ENCODE measurements at regions of chr1 and their contacts with region 1.

Region 1: GRCh38 chr1:202056644-202057461 is 46.5 kb downstream of the ELF3 start:
- DNase-seq: peak; percentile 100
- H3K4me3 Mint-ChIP-seq: peak overlapping the region; percentile 28
- H3K27ac Mint-ChIP-seq: peak overlapping the region; percentile 97
- H3K4me1 Mint-ChIP-seq: peaks cover 33% of the 10 kb centered on the region
- H3K27me3 Mint-ChIP-seq: no peaks in the 10 kb centered on the region
- CTCF ChIP-seq: no peak

Region 2: GRCh38 chr1:201713085-201713810 is 343.6 kb before region 1 on chr1:
- CTCF ChIA-PET with region 1: no interaction called
- POLR2A ChIA-PET with region 1: no interaction called
- intact Hi-C with region 1: no loop called
- DNase-seq: peak; percentile 100
- H3K4me3 Mint-ChIP-seq: peak overlapping the region; percentile 59
- H3K27ac Mint-ChIP-seq: peak overlapping the region; percentile 98
- H3K4me1 Mint-ChIP-seq: peaks cover 54% of the 10 kb centered on the region
- H3K27me3 Mint-ChIP-seq: no peaks in the 10 kb centered on the region
- CTCF ChIP-seq: no peak

Region 3: GRCh38 chr1:202029171-202029665 is 27.6 kb before region 1 on chr1:
- CTCF ChIA-PET with region 1: interaction called, 8 read pairs
- POLR2A ChIA-PET with region 1: interaction called, 57 read pairs
- intact Hi-C with region 1: no loop called
- DNase-seq: peak; percentile 94
- H3K4me3 Mint-ChIP-seq: no peak overlapping the region
- H3K27ac Mint-ChIP-seq: peak overlapping the region; percentile 89
- H3K4me1 Mint-ChIP-seq: peaks cover 28% of the 10 kb centered on the region
- H3K27me3 Mint-ChIP-seq: peaks cover 30% of the 10 kb centered on the region
- CTCF ChIP-seq: no peak

Region 4: GRCh38 chr1:202034683-202035462 is 22.0 kb before region 1 on chr1:
- CTCF ChIA-PET with region 1: interaction called, 8 read pairs
- POLR2A ChIA-PET with region 1: interaction called, 57 read pairs
- intact Hi-C with region 1: no loop called
- DNase-seq: peak; percentile 97
- H3K4me3 Mint-ChIP-seq: peak overlapping the region; percentile 30
- H3K27ac Mint-ChIP-seq: peak overlapping the region; percentile 58
- H3K4me1 Mint-ChIP-seq: peaks cover 29% of the 10 kb centered on the region
- H3K27me3 Mint-ChIP-seq: peaks cover 6% of the 10 kb centered on the region
- CTCF ChIP-seq: no peak

Region 5: DNA sequence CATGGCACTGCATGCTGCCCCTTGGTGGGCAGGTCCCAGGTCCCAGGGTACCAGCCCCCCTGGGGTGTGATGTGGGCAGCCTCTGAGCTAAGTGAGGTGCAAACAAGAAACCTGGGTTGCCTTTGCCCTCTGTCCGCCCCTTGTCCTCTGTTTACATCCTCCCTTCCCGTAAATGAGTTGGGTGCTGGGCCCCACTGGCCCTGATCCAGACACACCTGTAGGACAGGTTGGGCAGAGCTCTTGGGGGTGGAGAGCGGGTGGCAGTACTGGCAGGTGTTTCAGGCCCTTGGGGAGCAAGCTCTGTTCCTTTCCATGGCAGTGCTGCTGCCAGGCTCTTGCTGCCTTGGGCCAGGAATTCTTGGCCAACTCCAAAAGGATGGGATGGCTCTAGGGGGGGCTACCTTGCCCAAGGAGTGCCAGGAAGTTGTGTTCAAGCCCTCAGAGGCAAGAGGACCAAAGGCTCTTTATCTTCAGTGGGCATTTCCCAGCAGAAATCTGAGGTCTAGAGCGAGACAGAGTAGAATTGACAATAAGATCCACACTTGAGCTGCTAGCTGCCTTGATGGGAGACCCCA is 10.5 kb before region 1 on chr1:
- CTCF ChIA-PET with region 1: interaction called, 8 read pairs
- POLR2A ChIA-PET with region 1: interaction called, 18 read pairs
- intact Hi-C with region 1: no loop called
- DNase-seq: peak; percentile 95
- H3K4me3 Mint-ChIP-seq: no peak overlapping the region
- H3K27ac Mint-ChIP-seq: peak overlapping the region; percentile 3
- H3K4me1 Mint-ChIP-seq: peaks cover 20% of the 10 kb centered on the region
- H3K27me3 Mint-ChIP-seq: no peaks in the 10 kb centered on the region
- CTCF ChIP-seq: no peak

Region 6: GRCh38 chr1:202069662-202070061 is 12.8 kb after region 1 on chr1:
- CTCF ChIA-PET with region 1: interaction called, 5 read pairs
- POLR2A ChIA-PET with region 1: interaction called, 13 read pairs
- intact Hi-C with region 1: no loop called
- DNase-seq: no peak
- H3K4me3 Mint-ChIP-seq: no peak overlapping the region
- H3K27ac Mint-ChIP-seq: no peak overlapping the region
- H3K4me1 Mint-ChIP-seq: peaks cover under 1% of the 10 kb centered on the region
- H3K27me3 Mint-ChIP-seq: no peaks in the 10 kb centered on the region
- CTCF ChIP-seq: no peak

Region 7: GRCh38 chr1:202112839-202113672 is 56.2 kb after region 1 on chr1:
- CTCF ChIA-PET with region 1: interaction called, 3 read pairs
- POLR2A ChIA-PET with region 1: interaction called, 16 read pairs
- intact Hi-C with region 1: no loop called
- DNase-seq: peak; percentile 27
- H3K4me3 Mint-ChIP-seq: no peak overlapping the region
- H3K27ac Mint-ChIP-seq: no peak overlapping the region
- H3K4me1 Mint-ChIP-seq: peaks cover 31% of the 10 kb centered on the region
- H3K27me3 Mint-ChIP-seq: no peaks in the 10 kb centered on the region
- CTCF ChIP-seq: no peak